Activated naive CD8-positive, alpha-beta T cell treated with anti-CD3 and anti-CD28 coated beads, Interleukin-2, amount 10 ng/mL, durations not matched to agents 7 days and 5 days (primary cell): ENCODE measurements at regions of chr5 and their contacts with region 1.

Region 1: GRCh38 chr5:142095651-142096330 is 12.8 kb upstream of the NDFIP1 start:
- DNase-seq: peak; percentile 55
- ATAC-seq: peak; percentile 88
- H3K4me3 Mint-ChIP-seq: peak overlapping the region; percentile 54
- H3K27ac Mint-ChIP-seq: peak overlapping the region; percentile 89
- H3K4me1 Mint-ChIP-seq: peaks cover 41% of the 10 kb centered on the region
- H3K27me3 Mint-ChIP-seq: no peaks in the 10 kb centered on the region

Region 2: DNA sequence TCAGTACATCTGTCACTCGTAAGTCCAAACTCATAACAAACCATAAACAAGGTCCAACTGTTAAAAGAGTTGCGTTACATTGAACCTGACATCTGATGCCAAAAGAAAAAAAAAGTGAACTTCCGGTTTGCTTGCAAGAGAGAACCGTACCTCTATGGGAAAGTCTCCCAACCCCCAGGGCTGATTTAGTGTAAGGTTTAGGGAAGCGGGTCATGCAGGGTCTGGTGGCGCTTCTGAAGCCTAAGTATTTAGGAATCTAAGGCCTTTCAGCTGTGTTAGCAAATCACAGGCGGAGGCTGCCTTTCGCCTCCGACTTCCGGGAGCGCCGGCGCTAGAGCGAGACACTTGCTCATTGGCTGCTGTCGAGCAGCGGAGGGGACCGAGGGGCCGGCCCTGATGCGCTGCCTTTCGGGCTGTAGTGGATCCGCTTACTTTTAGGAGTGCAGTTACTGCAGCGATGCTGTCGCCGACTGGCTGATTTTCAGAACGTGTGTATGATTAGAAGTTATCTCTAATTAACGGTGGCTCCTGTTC is 71.0 kb before region 1 on chr5:
- POLR2A ChIA-PET with region 1: interaction called, 13 read pairs
- DNase-seq: peak; percentile 86
- ATAC-seq: peak; percentile 100
- H3K4me3 Mint-ChIP-seq: peak overlapping the region; percentile 92
- H3K27ac Mint-ChIP-seq: peak overlapping the region; percentile 95
- H3K4me1 Mint-ChIP-seq: peaks cover 14% of the 10 kb centered on the region
- H3K27me3 Mint-ChIP-seq: no peaks in the 10 kb centered on the region